ENCODE measurements at regions of chr1 and their contacts with region 1.

Region 1: DNA sequence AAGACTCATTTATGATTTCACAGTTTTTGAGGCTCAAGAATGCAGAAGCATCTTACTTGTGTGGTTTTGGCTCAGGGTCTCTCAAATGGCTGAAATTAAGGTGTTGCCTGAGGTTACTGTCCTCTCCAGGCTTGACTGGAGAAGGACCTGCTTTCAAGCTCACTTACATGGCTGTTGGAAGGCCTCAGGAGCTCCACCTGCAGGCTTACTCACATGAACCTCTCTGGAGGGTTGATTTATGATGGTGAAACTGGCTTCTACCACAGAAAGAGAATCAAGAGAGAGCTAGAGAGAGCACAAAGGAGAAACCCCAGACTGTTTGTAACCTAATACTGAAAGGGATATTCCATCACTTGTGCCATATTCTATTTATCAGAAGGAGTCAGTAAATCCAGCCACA is 6.2 kb upstream of the KCNK2 start:
- DNase-seq: peak; percentile 34
- ATAC-seq: peak; percentile 89
- H3K4me3 ChIP-seq: no peak overlapping the region
- H3K27ac ChIP-seq: no peak overlapping the region
- H3K4me1 ChIP-seq: no peaks in the 10 kb centered on the region
- H3K27me3 ChIP-seq: 0 out of 5 replicates have a peak, but pooled peaks cover 0 to 8% of the 10 kb centered on the region in 2 experiments
- CTCF ChIP-seq: peak; percentile 24; the same call in 1 of the 2 replicates
- EP300 ChIP-seq: no peak
- POLR2A ChIP-seq: no peak
- RAD21 ChIP-seq: no peak

Region 2: DNA sequence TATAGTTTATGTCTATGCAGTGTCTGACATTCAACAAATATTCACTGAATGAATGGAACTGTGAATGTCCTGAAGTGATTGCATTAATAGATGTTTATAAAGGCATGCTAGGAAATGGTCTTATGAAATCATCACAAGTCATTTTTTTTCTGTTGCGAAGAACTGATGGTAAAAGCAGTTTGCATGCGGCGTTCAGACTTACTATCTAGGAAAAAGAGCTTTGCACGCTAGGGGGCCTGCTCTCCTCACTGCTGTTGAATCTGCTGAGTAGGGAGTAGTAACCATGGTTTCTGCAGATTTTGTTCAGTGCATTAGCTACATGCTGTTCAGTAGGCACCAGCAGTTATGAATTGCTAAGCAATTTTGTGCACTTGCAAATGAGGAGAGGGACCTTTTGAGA is 415.5 kb before region 1 on chr1:
- CTCF ChIA-PET with region 1: no interaction called
- POLR2A ChIA-PET with region 1: no interaction called
- in situ Hi-C with region 1: no loop called
- intact Hi-C with region 1: loop called (anchors 1 kb)
- DNase-seq: peak; percentile 6
- ATAC-seq: peak; percentile 78
- H3K4me3 ChIP-seq: no peak overlapping the region
- H3K27ac ChIP-seq: no peak overlapping the region
- H3K4me1 ChIP-seq: no peaks in the 10 kb centered on the region
- H3K27me3 ChIP-seq: no peaks in the 10 kb centered on the region
- CTCF ChIP-seq: peak; percentile 61
- EP300 ChIP-seq: no peak
- POLR2A ChIP-seq: no peak
- RAD21 ChIP-seq: peak; percentile 31; the same call in 1 of the 2 replicates

Region 3: DNA sequence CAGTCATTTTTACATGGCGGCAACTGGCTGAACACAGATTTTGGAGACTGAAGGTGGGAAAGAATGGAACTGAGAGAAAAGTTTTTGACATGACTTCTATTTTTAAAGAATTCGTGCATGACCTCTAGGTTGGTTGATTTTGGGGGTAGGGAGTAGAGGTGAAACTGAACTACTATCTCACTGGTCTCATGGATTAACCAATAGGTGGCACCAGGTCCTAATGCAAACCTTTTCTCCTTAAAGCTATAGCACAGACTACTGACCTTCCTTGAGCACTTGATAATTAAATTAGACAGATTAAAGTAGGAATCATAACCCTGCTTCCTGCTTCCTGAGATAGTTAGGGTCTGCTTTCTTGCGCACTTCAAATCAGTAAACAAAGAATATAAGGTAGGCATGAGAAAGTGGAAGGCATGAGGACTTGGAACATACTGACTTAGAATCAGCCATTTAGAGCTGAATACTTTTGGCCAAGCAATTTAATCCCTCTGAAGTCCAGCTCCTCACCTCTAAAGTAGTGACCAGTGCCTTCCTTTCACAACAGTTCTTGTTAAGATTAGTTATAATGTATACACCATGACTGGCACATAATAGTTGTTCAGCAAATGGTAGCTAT is 267.4 kb before region 1 on chr1:
- CTCF ChIA-PET with region 1: no interaction called
- POLR2A ChIA-PET with region 1: no interaction called
- in situ Hi-C with region 1: no loop called
- intact Hi-C with region 1: loop called (anchors 1 kb)
- DNase-seq: peak; percentile 22
- ATAC-seq: peak; percentile 53; the same call in 1 of the 3 replicates
- H3K4me3 ChIP-seq: no peak overlapping the region
- H3K27ac ChIP-seq: no peak overlapping the region
- H3K4me1 ChIP-seq: no peaks in the 10 kb centered on the region
- H3K27me3 ChIP-seq: no peaks in the 10 kb centered on the region
- CTCF ChIP-seq: peak; percentile 40; the same call in 1 of the 2 replicates
- EP300 ChIP-seq: no peak
- POLR2A ChIP-seq: no peak
- RAD21 ChIP-seq: no peak

Region 4: DNA sequence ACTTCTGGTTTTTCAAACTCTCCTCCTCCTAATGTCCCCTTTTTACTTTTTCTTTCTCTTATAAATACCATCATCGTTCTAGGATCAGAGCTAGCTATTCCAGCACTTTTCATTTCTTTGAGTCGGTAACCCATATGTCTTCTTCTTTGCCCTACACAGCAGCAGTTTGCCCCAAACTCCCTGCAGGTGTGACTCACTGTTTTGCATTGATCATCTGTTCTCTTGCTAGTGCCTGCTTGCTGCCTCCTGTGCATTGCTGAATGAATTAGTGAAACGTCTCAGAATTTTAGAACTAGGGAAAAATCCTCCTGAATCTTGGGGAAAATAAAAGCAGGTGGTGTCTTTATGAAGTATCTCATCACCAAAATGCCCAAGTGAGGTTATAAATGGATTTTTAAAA is 28.0 kb after region 1 on chr1:
- CTCF ChIA-PET with region 1: no interaction called
- POLR2A ChIA-PET with region 1: no interaction called
- in situ Hi-C with region 1: no loop called
- intact Hi-C with region 1: no loop called
- DNase-seq: no peak
- ATAC-seq: no peak
- H3K4me3 ChIP-seq: no peak overlapping the region
- H3K27ac ChIP-seq: no peak overlapping the region
- H3K4me1 ChIP-seq: no peaks in the 10 kb centered on the region
- H3K27me3 ChIP-seq: no peaks in the 10 kb centered on the region
- CTCF ChIP-seq: no peak
- EP300 ChIP-seq: no peak
- POLR2A ChIP-seq: no peak
- RAD21 ChIP-seq: no peak